ENCODE measurements at regions of chr2 and their contacts with region 1.

Region 1: GRCh38 chr2:43194121-43194869 is 32.1 kb downstream of the ZFP36L2 start:
- DNase-seq: peak; percentile 97 to 98
- H3K4me3 ChIP-seq: 0 out of 2 replicates have a peak overlapping the region, but pooled peaks have one; percentile 0
- H3K4me3 Mint-ChIP-seq: peak overlapping the region; percentile 67
- H3K27ac Mint-ChIP-seq: peak overlapping the region; percentile 91
- H3K4me1 ChIP-seq: peaks cover 86% of the 10 kb centered on the region
- H3K4me1 Mint-ChIP-seq: peaks cover 60% of the 10 kb centered on the region
- H3K27me3 ChIP-seq: no peaks in the 10 kb centered on the region
- H3K27me3 Mint-ChIP-seq: no peaks in the 10 kb centered on the region
- CTCF ChIP-seq: no peak

Region 2: GRCh38 chr2:43131024-43131889 is 63.0 kb before region 1 on chr2:
- CTCF ChIA-PET with region 1: interaction called, 3 read pairs
- POLR2A ChIA-PET with region 1: no interaction called
- intact Hi-C with region 1: loop called (anchors 2 kb)
- DNase-seq: peak; percentile 59 to 65
- H3K4me3 ChIP-seq: no peak overlapping the region
- H3K4me3 Mint-ChIP-seq: no peak overlapping the region
- H3K27ac Mint-ChIP-seq: peak overlapping the region; percentile 51
- H3K4me1 ChIP-seq: peaks cover 50% of the 10 kb centered on the region
- H3K4me1 Mint-ChIP-seq: peaks cover 53% of the 10 kb centered on the region
- H3K27me3 ChIP-seq: no peaks in the 10 kb centered on the region
- H3K27me3 Mint-ChIP-seq: no peaks in the 10 kb centered on the region
- CTCF ChIP-seq: peak in 1 of 2 experiments; percentile 33

Region 3: DNA sequence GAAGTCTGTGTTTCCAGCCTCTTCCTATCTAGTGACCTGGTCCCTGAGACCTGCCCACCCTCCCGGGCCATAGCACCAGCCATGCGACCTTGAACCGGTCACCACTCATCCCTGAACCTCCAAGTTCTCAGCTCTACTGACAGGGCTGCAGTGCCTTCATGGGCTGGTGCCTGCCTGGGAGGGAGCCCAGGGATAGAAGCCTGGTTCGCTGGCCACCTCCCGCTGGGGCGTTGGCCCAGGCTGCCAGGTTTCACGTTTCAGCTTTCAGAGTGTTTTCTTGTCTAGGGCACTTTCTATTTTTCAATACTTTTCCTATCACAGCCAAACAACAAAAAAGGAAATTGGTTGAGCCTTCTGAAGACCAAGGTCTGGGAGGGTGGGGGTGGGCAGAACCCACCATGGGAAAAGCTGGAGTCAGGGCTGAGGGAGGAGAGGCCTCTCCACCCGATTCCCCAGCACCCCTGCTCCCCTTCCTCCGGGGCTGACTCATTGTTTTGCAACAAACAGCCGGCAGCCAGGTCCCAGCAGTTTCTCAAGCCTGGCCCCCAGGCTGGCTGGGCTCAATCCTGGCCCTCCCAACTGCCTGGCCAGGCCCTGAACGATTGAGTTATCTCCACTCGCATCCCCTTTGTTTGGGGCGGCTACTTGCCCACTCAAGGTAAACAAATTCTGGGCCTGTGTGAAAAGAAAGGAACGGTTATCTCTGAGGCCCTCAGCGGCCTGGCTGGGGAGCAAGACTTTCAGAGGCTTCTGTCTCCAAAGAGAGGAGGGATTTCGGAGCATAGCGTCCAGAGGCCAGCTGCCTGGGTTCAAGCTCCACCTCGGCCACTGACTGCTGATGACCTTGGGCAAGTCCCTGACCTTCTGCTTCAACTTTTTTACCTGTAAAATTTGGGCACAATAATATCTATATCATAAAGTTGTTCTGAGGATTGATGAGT is 15.4 kb before region 1 on chr2:
- CTCF ChIA-PET with region 1: interaction called, 3 read pairs
- POLR2A ChIA-PET with region 1: interaction called, 3 read pairs
- intact Hi-C with region 1: loop called (anchors 2 kb)
- DNase-seq: peak; percentile 66 to 67
- H3K4me3 ChIP-seq: no peak overlapping the region
- H3K4me3 Mint-ChIP-seq: no peak overlapping the region
- H3K27ac Mint-ChIP-seq: peak overlapping the region; percentile 77
- H3K4me1 ChIP-seq: peaks cover 46% of the 10 kb centered on the region
- H3K4me1 Mint-ChIP-seq: peaks cover 35% of the 10 kb centered on the region
- H3K27me3 ChIP-seq: no peaks in the 10 kb centered on the region
- H3K27me3 Mint-ChIP-seq: no peaks in the 10 kb centered on the region
- CTCF ChIP-seq: no peak

Region 4: GRCh38 chr2:43219383-43220228 is 25.3 kb after region 1 on chr2:
- CTCF ChIA-PET with region 1: interaction called, 4 read pairs
- POLR2A ChIA-PET with region 1: interaction called, 3 read pairs
- intact Hi-C with region 1: loop called (anchors 1 kb)
- DNase-seq: peak; percentile 91 to 92
- H3K4me3 ChIP-seq: peak overlapping the region; percentile 98
- H3K4me3 Mint-ChIP-seq: peak overlapping the region; percentile 70
- H3K27ac Mint-ChIP-seq: peak overlapping the region; percentile 76
- H3K4me1 ChIP-seq: peaks cover 40% of the 10 kb centered on the region
- H3K4me1 Mint-ChIP-seq: peaks cover 30% of the 10 kb centered on the region
- H3K27me3 ChIP-seq: no peaks in the 10 kb centered on the region
- H3K27me3 Mint-ChIP-seq: no peaks in the 10 kb centered on the region
- CTCF ChIP-seq: no peak

Measured in Caco-2 (cell line).